ENCODE measurements at regions of chr7 and their contacts with region 1.

Region 1: GRCh38 chr7:151349507-151349853 is 7.9 kb downstream of the NUB1 start:
- DNase-seq: no peak
- H3K4me3 ChIP-seq: peak overlapping the region in 1 of 2 donors; percentile 24
- H3K27ac ChIP-seq: peak overlapping the region; percentile 10
- H3K4me1 ChIP-seq: peaks cover 7% of the 10 kb centered on the region
- H3K27me3 ChIP-seq: no peaks in the 10 kb centered on the region
- CTCF ChIP-seq: no peak
- POLR2A ChIP-seq: no peak

Region 2: DNA sequence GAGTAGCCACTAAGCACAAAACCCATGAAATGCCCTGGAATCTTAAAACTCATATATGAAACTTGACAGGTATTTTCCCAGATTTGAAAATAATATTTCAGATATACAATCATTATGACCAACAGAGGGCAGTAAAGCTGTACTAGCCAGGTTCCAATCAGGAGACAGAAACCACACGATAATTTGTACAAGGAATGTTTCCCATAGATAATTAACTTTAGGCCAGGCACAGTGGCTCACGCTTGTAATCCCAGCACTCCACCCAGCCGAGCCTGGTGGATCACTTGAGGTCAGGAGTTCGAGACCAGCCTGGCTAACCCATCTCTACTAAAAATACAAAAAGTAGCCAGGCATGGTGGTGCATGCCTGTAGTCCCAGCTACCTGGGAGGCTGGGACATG is 38.9 kb before region 1 on chr7:
- intact Hi-C with region 1: loop called (anchors 5 kb)
- DNase-seq: peak in 1 of 2 donors; percentile 20
- H3K4me3 ChIP-seq: no peak overlapping the region
- H3K27ac ChIP-seq: no peak overlapping the region
- H3K4me1 ChIP-seq: no peaks in the 10 kb centered on the region
- H3K27me3 ChIP-seq: no peaks in the 10 kb centered on the region
- CTCF ChIP-seq: no peak
- POLR2A ChIP-seq: no peak

Measured in vagina (tissue), 2 donors.